ENCODE measurements at regions of chr6 and their contacts with region 1.

Region 1: DNA sequence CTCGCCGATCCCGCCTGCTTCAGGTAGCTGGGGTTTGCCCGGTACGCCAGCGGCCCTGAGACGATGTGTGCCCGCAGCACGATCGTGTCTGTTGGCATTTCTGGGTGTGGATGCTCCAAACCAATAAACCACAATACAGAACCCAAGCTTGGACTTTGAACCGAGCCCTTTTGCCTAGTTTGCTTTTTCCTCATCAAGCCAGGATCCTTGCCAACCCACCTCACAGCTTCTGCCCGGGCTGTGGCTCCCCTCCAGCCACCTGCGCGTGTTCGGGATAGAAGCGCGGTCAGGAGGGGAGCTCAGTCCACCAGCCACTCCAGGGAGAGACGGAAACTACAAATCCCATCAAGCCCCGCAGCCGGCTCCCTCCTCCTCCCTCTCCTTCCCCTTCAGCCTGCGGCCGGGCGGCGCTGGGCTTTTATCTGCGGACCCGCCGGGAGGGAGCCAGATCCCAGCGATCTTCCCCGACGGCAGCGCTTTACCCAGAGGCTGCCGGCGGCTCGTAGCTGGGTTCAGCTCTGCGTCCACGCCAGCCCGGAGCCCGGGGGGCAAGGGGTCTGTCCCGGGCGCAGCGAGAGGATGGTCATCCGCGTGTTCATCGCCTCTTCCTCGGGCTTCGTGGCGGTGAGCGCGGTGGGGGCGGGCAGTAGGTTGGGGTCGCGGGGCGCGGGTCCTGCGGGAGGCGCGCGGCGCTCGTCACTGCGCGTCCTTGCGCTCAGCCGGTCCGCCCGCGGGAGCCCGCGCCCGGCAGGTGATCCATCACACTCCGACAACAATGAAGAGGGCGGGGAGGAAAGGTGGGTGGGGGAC is at the start of gene SH3BGRL2:
- DNase-seq: peak; percentile 88 to 89
- H3K4me3 ChIP-seq: peak within 1 kb of the TSS; percentile 90
- H3K4me3 Mint-ChIP-seq: peak within 1 kb of the TSS; percentile 95
- H3K27ac Mint-ChIP-seq: peak within 1 kb of the TSS; percentile 94
- H3K4me1 ChIP-seq: peaks cover 32% of the 10 kb centered on the region
- H3K4me1 Mint-ChIP-seq: peaks cover 27% of the 10 kb centered on the region
- H3K27me3 ChIP-seq: no peaks in the 10 kb centered on the region
- H3K27me3 Mint-ChIP-seq: no peaks in the 10 kb centered on the region
- CTCF ChIP-seq: no peak
- total RNA-seq, gene SH3BGRL2: 102 and 106 TPM in 2 replicates

Region 2: GRCh38 chr6:79353226-79353625 is 277.9 kb before region 1 on chr6:
- CTCF ChIA-PET with region 1: no interaction called
- POLR2A ChIA-PET with region 1: no interaction called
- intact Hi-C with region 1: no loop called
- DNase-seq: no peak
- H3K4me3 ChIP-seq: no peak overlapping the region
- H3K4me3 Mint-ChIP-seq: no peak overlapping the region
- H3K27ac Mint-ChIP-seq: no peak overlapping the region
- H3K4me1 ChIP-seq: no peaks in the 10 kb centered on the region
- H3K4me1 Mint-ChIP-seq: no peaks in the 10 kb centered on the region
- H3K27me3 ChIP-seq: no peaks in the 10 kb centered on the region
- H3K27me3 Mint-ChIP-seq: no peaks in the 10 kb centered on the region
- CTCF ChIP-seq: no peak

Region 3: DNA sequence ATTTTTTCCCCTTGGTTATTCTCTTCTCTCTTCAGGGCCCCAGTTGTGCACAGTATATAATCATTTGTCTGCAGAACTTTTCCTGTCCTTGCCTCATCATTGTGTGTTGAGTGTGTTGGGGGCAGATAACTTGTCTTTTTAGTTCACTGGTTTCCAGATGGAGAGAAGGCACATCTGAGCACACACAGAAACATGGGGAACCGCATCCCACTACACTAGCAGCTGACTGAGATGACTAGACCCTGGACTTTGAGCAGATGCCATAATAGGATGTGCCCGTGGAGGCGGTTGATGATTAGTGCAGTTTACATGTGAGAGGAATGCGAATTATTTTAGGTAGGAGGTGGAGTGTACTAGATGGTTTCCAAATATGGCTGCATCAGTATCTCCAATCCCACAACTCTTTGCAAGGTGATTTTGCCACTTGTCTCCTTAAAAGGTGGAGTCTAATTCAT is 26.5 kb before region 1 on chr6:
- CTCF ChIA-PET with region 1: no interaction called
- POLR2A ChIA-PET with region 1: interaction called, 15 read pairs
- intact Hi-C with region 1: loop called (anchors 1 kb)
- DNase-seq: peak; percentile 82 to 90
- H3K4me3 ChIP-seq: no peak overlapping the region
- H3K4me3 Mint-ChIP-seq: peak overlapping the region; percentile 18
- H3K27ac Mint-ChIP-seq: peak overlapping the region; percentile 80
- H3K4me1 ChIP-seq: peaks cover 96% of the 10 kb centered on the region
- H3K4me1 Mint-ChIP-seq: peaks cover 62% of the 10 kb centered on the region
- H3K27me3 ChIP-seq: no peaks in the 10 kb centered on the region
- H3K27me3 Mint-ChIP-seq: no peaks in the 10 kb centered on the region
- CTCF ChIP-seq: no peak